ENCODE measurements at regions of chr10 and their contacts with region 1.

Region 1: GRCh38 chr10:122342293-122343134 is 32.0 kb upstream of the PLEKHA1 start:
- DNase-seq: peak; percentile 73
- ATAC-seq: peak; percentile 82
- H3K4me3 Mint-ChIP-seq: no peak overlapping the region
- H3K27ac Mint-ChIP-seq: no peak overlapping the region
- H3K4me1 Mint-ChIP-seq: peaks cover 11% of the 10 kb centered on the region
- H3K27me3 Mint-ChIP-seq: peaks cover 4% of the 10 kb centered on the region

Region 2: GRCh38 chr10:122298598-122299301 is 43.8 kb before region 1 on chr10:
- CTCF ChIA-PET with region 1: interaction called, 6 read pairs
- POLR2A ChIA-PET with region 1: no interaction called
- intact Hi-C with region 1: loop called (anchors 2 to 5 kb)
- DNase-seq: peak; percentile 80
- ATAC-seq: peak; percentile 94
- H3K4me3 Mint-ChIP-seq: no peak overlapping the region
- H3K27ac Mint-ChIP-seq: no peak overlapping the region
- H3K4me1 Mint-ChIP-seq: peaks cover 5% of the 10 kb centered on the region
- H3K27me3 Mint-ChIP-seq: peaks cover 3% of the 10 kb centered on the region

Region 3: DNA sequence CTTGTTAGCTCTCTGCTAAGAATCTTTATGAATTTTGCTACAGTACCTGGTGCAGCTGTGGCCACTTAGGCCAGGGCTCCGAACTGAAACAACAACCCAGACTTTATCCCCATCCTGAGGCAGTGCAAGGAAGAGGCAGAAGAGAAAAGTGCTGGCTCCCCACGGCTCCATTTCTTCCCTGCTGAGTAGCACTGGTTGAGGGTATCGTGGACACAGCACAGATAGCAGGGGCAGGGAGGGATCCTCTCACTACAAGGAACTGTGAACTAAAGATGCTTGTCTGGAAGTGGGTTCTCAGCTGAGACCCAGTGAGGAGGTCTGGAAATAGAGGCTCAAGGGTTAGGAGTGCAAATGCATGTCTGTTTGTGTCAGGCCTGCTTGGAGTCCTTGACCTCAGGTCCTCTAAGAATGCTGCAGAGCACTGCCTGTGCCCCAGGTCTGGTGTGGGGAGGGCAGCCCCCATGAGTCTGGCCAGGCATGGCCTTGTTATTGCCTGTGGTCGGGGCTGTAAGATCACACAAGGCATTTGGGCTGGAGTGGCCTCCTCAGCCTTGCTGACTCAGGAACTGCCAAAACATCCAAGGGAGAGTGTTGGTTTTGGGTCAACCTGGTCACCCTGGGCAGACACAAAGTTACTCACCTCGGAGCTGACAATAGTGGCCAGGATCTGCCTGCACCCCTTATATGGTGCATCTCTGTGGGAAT is 276.1 kb after region 1 on chr10:
- CTCF ChIA-PET with region 1: no interaction called
- POLR2A ChIA-PET with region 1: no interaction called
- intact Hi-C with region 1: no loop called
- DNase-seq: no peak
- ATAC-seq: no peak
- H3K4me3 Mint-ChIP-seq: no peak overlapping the region
- H3K27ac Mint-ChIP-seq: no peak overlapping the region
- H3K4me1 Mint-ChIP-seq: no peaks in the 10 kb centered on the region
- H3K27me3 Mint-ChIP-seq: peaks cover 10% of the 10 kb centered on the region